A673 (cell line): ENCODE measurements at regions of chr12 and their contacts with region 1.

Region 1: GRCh38 chr12:127108360-127109215 is 1158.4 kb upstream of the TMEM132C start:
- DNase-seq: peak; percentile 85
- H3K4me3 ChIP-seq: no peak overlapping the region
- H3K27ac ChIP-seq: peak overlapping the region; percentile 38
- H3K4me1 ChIP-seq: peaks cover 11% of the 10 kb centered on the region
- H3K27me3 ChIP-seq: no peaks in the 10 kb centered on the region
- CTCF ChIP-seq: peak; percentile 83

Region 2: GRCh38 chr12:126747530-126748149 is 360.9 kb before region 1 on chr12:
- CTCF ChIA-PET with region 1: no interaction called
- POLR2A ChIA-PET with region 1: no interaction called
- intact Hi-C with region 1: no loop called
- DNase-seq: peak; percentile 76
- H3K4me3 ChIP-seq: no peak overlapping the region
- H3K27ac ChIP-seq: no peak overlapping the region
- H3K4me1 ChIP-seq: no peaks in the 10 kb centered on the region
- H3K27me3 ChIP-seq: no peaks in the 10 kb centered on the region
- CTCF ChIP-seq: peak; percentile 98

Region 3: GRCh38 chr12:127230843-127231260 is 122.3 kb after region 1 on chr12:
- CTCF ChIA-PET with region 1: no interaction called
- POLR2A ChIA-PET with region 1: no interaction called
- intact Hi-C with region 1: no loop called
- DNase-seq: peak; percentile 59
- H3K4me3 ChIP-seq: no peak overlapping the region
- H3K27ac ChIP-seq: no peak overlapping the region
- H3K4me1 ChIP-seq: peaks cover 6% of the 10 kb centered on the region
- H3K27me3 ChIP-seq: no peaks in the 10 kb centered on the region
- CTCF ChIP-seq: no peak

Region 4: DNA sequence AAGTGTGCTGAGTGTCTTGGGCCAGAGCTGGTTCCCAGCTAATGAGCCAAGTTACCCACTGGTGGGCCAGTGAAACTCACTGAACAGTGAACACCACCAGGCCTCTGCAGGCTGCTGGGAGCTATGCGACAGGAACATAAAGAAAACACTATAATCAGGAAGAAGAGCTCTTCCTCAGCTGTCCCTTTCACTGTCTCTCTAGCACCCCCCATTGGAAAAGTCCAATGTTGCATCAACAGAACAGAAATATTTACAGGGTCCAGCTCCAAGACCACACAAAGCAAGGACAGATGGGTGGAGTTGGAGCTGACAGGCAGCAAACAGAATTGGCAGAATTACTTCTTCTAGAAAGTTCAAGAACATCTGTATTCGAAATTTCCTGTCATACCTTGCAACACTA is 254.8 kb after region 1 on chr12:
- CTCF ChIA-PET with region 1: interaction called, 11 read pairs
- POLR2A ChIA-PET with region 1: no interaction called
- intact Hi-C with region 1: loop called (anchors 5 kb)
- DNase-seq: peak; percentile 74
- H3K4me3 ChIP-seq: no peak overlapping the region
- H3K27ac ChIP-seq: no peak overlapping the region
- H3K4me1 ChIP-seq: no peaks in the 10 kb centered on the region
- H3K27me3 ChIP-seq: no peaks in the 10 kb centered on the region
- CTCF ChIP-seq: peak; percentile 67

Region 5: GRCh38 chr12:127677537-127678131 is 569.0 kb after region 1 on chr12:
- CTCF ChIA-PET with region 1: no interaction called
- POLR2A ChIA-PET with region 1: no interaction called
- intact Hi-C with region 1: loop called (anchors 10 kb)
- DNase-seq: peak; percentile 83
- H3K4me3 ChIP-seq: no peak overlapping the region
- H3K27ac ChIP-seq: no peak overlapping the region
- H3K4me1 ChIP-seq: no peaks in the 10 kb centered on the region
- H3K27me3 ChIP-seq: no peaks in the 10 kb centered on the region
- CTCF ChIP-seq: peak; percentile 91